Activated B cell treated with CpG ODN at 0.5 μM for 24 hours (primary cell): ENCODE measurements at regions of chr16 and their contacts with region 1.

Region 1: DNA sequence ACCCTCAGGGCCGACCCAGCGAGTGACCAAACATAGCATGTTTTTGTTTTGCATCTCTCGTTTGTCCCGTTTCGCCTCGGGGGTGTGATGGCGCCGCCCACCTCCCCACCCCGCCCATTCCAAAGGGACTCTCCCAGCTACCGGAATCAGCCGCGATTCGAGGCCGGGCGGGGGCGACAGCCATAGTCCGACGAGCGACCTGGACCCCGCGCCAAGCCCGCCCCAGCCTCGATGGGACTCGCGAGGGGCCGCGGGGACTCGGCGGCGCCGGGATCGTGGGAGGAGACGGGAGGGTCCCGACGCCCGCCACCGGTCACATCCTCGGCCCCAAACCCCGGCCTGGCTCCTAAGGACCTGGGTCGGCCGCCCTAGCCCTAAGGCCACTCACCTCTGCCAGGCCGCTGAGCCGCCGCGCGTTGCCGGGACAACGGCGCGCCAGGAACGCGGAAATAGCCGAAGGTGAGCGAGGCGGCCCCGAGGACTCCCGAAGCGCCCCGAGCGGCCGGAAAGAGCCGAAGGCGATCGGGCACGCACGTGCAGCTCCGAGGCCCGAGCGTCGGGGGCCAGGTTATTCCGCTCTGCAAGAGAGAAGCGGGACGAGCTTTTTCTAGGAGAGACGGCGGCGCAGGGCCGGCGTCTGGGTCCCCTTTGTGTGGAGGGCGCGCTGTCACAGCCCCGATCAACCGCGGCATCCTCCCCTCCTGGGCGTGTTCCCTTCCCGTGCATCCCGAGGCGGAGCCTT is 1.4 kb downstream of the IFT140 start:
- DNase-seq: peak; percentile 95
- ATAC-seq: peak; percentile 55
- H3K4me3 Mint-ChIP-seq: peak overlapping the region; percentile 88
- H3K27ac Mint-ChIP-seq: peak overlapping the region; percentile 12
- H3K4me1 Mint-ChIP-seq: peaks cover 40% of the 10 kb centered on the region
- H3K27me3 Mint-ChIP-seq: peaks cover 5% of the 10 kb centered on the region
- CTCF ChIP-seq: no peak

Region 2: DNA sequence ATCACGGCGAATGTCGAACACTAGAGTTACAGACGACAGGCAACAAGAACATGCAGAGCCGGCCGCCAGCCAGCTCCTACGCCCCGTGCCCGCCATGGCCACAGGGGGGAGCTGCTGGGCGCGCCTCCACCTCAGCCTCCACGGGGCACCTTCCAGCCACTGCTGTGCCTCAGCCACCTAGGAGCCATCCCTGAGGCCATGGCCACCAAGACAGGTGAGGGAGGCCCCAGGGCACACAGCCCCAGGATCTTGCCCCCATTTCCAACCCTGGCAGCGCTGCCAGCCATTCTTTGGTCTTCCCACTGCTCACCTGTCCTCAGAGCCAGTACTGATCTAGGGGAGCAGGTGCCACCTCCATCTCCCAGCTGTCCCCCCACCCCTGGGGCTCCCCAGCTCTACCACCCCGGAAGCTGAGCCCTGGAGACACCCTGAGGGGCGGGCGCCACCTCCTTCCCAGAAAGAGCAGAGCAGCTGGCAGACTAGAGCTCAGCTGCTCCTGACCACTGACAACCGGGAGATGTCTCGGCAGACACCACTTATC is 246.9 kb before region 1 on chr16:
- CTCF ChIA-PET with region 1: interaction called, 4 read pairs
- POLR2A ChIA-PET with region 1: no interaction called
- intact Hi-C with region 1: loop called (anchors 5 kb)
- DNase-seq: peak; percentile 72
- ATAC-seq: peak; percentile 96
- H3K4me3 Mint-ChIP-seq: no peak overlapping the region
- H3K27ac Mint-ChIP-seq: no peak overlapping the region
- H3K4me1 Mint-ChIP-seq: peaks cover 3% of the 10 kb centered on the region
- H3K27me3 Mint-ChIP-seq: no peaks in the 10 kb centered on the region
- CTCF ChIP-seq: no peak

Region 3: GRCh38 chr16:1458336-1458976 is 152.0 kb before region 1 on chr16:
- CTCF ChIA-PET with region 1: no interaction called
- POLR2A ChIA-PET with region 1: no interaction called
- intact Hi-C with region 1: loop called (anchors 10 kb)
- DNase-seq: no peak
- ATAC-seq: peak; percentile 72
- H3K4me3 Mint-ChIP-seq: peak overlapping the region; percentile 76
- H3K27ac Mint-ChIP-seq: peak overlapping the region; percentile 99
- H3K4me1 Mint-ChIP-seq: peaks cover 26% of the 10 kb centered on the region
- H3K27me3 Mint-ChIP-seq: no peaks in the 10 kb centered on the region
- CTCF ChIP-seq: no peak

Region 4: GRCh38 chr16:1677802-1678496 is 67.5 kb after region 1 on chr16 and contains the start of gene JPT2:
- CTCF ChIA-PET with region 1: no interaction called
- POLR2A ChIA-PET with region 1: interaction called, 14 read pairs
- intact Hi-C with region 1: loop called (anchors 1 kb)
- DNase-seq: peak; percentile 92
- ATAC-seq: peak; percentile 96
- H3K4me3 Mint-ChIP-seq: peak within 1 kb of the TSS; percentile 89
- H3K27ac Mint-ChIP-seq: peak within 1 kb of the TSS; percentile 76
- H3K4me1 Mint-ChIP-seq: peaks cover 29% of the 10 kb centered on the region
- H3K27me3 Mint-ChIP-seq: no peaks in the 10 kb centered on the region
- CTCF ChIP-seq: no peak
- total RNA-seq, gene JPT2: 43.4 and 48.7 TPM in 2 replicates

Region 5: DNA sequence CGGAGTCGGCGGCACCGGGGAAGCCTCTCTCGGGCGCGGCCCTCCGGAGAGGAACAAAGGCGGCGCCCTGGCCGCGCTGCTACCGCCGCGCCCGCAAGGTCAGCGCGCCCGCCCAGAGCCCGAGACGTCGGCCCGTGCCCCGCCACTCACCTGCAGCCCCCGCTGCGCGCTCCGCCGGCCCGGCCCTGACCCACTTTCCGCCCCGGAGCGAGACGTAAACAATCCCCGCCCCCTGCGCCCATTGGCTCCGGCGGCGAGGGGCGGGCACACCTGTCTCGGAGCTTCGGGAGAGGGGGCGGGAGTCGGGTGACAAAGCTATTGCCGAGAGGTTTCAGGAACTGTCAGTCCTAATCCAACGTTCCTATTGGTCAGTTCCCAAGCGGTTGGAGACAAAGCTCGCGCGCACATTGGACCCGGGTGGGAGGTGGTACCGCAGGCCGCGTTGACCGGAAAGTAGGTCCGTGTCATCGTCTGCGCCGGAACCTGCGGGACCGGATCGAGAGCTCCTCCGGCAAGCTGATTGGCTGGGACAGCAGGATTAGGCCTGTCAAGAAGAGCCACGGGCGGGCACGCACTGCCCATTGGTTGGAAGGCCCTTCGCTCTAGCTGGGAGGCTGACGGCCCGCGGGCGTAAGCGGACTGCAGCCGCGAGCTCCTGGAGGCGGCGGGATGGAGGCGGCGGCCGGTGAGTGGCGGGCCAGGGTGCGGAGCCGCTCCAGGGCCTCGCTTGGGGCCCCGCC is 172.1 kb after region 1 on chr16 and contains the starts of genes NUBP2 and SPSB3:
- CTCF ChIA-PET with region 1: no interaction called
- POLR2A ChIA-PET with region 1: no interaction called
- intact Hi-C with region 1: loop called (anchors 1 kb)
- DNase-seq: peak; percentile 91
- ATAC-seq: peak; percentile 88
- H3K4me3 Mint-ChIP-seq: peak within 1 kb of the TSS; percentile 89
- H3K27ac Mint-ChIP-seq: peak within 1 kb of the TSS; percentile 87
- H3K4me1 Mint-ChIP-seq: peaks cover 24% of the 10 kb centered on the region
- H3K27me3 Mint-ChIP-seq: no peaks in the 10 kb centered on the region
- CTCF ChIP-seq: no peak
- total RNA-seq, gene NUBP2: 53.7 and 54.2 TPM in 2 replicates
- total RNA-seq, gene SPSB3: 36.4 and 40.3 TPM in 2 replicates

Region 6: DNA sequence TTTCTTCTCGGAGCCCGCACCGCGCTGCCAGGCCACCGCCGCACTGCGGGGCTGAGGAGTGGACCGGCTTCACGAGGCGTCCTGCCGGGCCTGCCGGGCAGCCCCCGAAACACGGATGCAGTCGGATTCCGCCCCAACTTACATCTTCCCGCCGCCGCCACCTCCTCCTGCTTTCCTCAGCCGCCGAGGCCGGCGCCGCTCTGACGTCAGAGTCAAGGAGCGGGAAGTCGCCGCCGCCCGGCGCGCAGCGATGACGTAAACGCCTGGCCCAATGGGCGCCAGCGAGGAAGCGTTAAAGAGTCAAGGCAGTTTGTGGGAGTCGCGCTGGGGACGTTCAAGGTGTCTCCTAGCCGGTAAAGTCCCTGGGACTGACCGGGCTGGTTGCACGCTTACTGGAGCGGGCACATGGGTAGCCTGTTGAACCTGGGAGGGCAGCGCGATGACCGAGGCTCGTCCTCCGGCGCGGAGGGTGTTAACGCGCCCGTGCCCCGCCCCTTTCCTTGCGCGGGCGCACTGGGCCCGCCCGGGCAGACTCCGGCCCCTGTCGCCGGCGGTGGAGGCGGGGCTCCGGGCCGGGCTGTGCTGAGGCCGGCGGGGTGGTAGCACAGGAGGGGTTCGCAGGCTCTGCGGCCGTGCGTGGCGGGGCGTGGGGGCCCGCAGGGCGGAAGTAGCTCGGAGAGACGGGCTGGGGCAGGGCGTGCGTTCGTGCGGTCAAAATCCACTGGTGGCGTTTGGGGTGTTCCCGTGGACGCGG is 657.6 kb after region 1 on chr16 and contains the start of gene RNPS1:
- CTCF ChIA-PET with region 1: no interaction called
- POLR2A ChIA-PET with region 1: no interaction called
- intact Hi-C with region 1: loop called (anchors 5 kb)
- DNase-seq: peak; percentile 98
- ATAC-seq: peak; percentile 91
- H3K4me3 Mint-ChIP-seq: peak within 1 kb of the TSS; percentile 93
- H3K27ac Mint-ChIP-seq: peak within 1 kb of the TSS; percentile 98
- H3K4me1 Mint-ChIP-seq: peaks cover 43% of the 10 kb centered on the region
- H3K27me3 Mint-ChIP-seq: no peaks in the 10 kb centered on the region
- CTCF ChIP-seq: no peak
- total RNA-seq, gene RNPS1: 228 and 232 TPM in 2 replicates